ENCODE measurements at regions of chr12 and their contacts with region 1.

Region 1: GRCh38 chr12:53115112-53115890 is 12.0 kb downstream of the SOAT2 start:
- DNase-seq: no peak
- H3K4me3 ChIP-seq: no peak overlapping the region
- H3K27ac ChIP-seq: peak overlapping the region in 1 of 4 donors; percentile 61
- H3K4me1 ChIP-seq: peaks cover 10 to 17% (median 11%) of the 10 kb centered on the region in 4 donors
- H3K27me3 ChIP-seq: no peaks in the 10 kb centered on the region
- CTCF ChIP-seq: no peak
- EP300 ChIP-seq: no peak
- POLR2A ChIP-seq: no peak

Region 2: GRCh38 chr12:53151039-53151438 is 35.7 kb after region 1 on chr12:
- intact Hi-C with region 1: loop called (anchors 5 kb)
- DNase-seq: no peak
- H3K4me3 ChIP-seq: no peak overlapping the region
- H3K27ac ChIP-seq: no peak overlapping the region
- H3K4me1 ChIP-seq: peaks cover 0 to 25% (median 12%) of the 10 kb centered on the region in 4 donors
- H3K27me3 ChIP-seq: no peaks in the 10 kb centered on the region
- CTCF ChIP-seq: no peak
- EP300 ChIP-seq: no peak
- POLR2A ChIP-seq: no peak

Measured in esophagus muscularis mucosa (tissue), 4 donors.